ENCODE measurements at regions of chr7 and their contacts with region 1.

Region 1: DNA sequence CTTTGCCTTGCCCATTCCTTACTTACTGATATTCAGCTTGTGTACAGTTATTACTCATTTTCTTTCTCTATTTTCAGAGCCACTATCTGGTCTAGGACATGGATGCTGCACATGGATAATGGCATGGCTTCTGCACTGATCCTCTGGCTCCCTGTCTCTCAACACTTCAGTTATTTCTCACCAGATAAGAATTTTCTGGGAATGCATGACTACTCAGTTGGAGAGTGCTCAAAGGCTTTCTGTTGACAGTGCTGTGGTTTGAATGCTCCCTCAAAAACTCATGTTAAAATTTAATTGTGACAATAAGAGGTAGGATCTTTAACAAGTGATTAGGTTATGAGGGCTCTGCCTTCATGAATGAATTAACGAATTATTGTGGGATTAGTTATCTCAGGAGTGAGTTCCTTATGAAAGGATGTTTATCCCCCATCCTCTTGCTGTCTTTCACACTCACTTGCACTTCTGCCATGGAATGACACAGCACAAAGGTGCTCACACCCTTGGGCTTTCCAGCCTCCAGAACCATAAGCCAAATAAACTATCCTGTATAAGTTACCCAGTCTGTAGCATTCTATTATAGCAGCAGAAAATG is 16.1 kb upstream of the PIK3CG start:
- DNase-seq: no peak
- ATAC-seq: no peak
- H3K4me3 ChIP-seq: no peak overlapping the region
- H3K4me3 Mint-ChIP-seq: no peak overlapping the region
- H3K27ac ChIP-seq: no peak overlapping the region
- H3K27ac Mint-ChIP-seq: no peak overlapping the region
- H3K4me1 ChIP-seq: no peaks in the 10 kb centered on the region
- H3K4me1 Mint-ChIP-seq: no peaks in the 10 kb centered on the region
- H3K27me3 ChIP-seq: peaks cover 0 to 3% of the 10 kb centered on the region in 2 experiments
- H3K27me3 Mint-ChIP-seq: peaks cover 0 to 4% of the 10 kb centered on the region in 2 donors

Region 2: GRCh38 chr7:105365541-105366534 is 1483.1 kb before region 1 on chr7:
- CTCF ChIA-PET with region 1: no interaction called
- POLR2A ChIA-PET with region 1: interaction called in 1 of 2 experiments, 14 read pairs
- DNase-seq: no peak
- ATAC-seq: no peak
- H3K4me3 ChIP-seq: no peak overlapping the region
- H3K4me3 Mint-ChIP-seq: no peak overlapping the region
- H3K27ac ChIP-seq: no peak overlapping the region
- H3K27ac Mint-ChIP-seq: peak overlapping the region in 1 of 2 donors; percentile 42
- H3K4me1 ChIP-seq: peaks cover 0 to 7% of the 10 kb centered on the region in 2 experiments
- H3K4me1 Mint-ChIP-seq: peaks cover 44 to 59% (median 59%) of the 10 kb centered on the region in 3 donors
- H3K27me3 ChIP-seq: no peaks in the 10 kb centered on the region
- H3K27me3 Mint-ChIP-seq: no peaks in the 10 kb centered on the region